ENCODE measurements at regions of chr1 and their contacts with region 1.

Region 1: GRCh38 chr1:204115116-204115515 is 36.7 kb downstream of the ETNK2 start:
- DNase-seq: no peak
- H3K4me3 ChIP-seq: no peak overlapping the region
- H3K27ac ChIP-seq: 0 out of 2 replicates have a peak overlapping the region, but pooled peaks have one; percentile 31
- H3K4me1 ChIP-seq: peaks cover 42% of the 10 kb centered on the region
- H3K27me3 ChIP-seq: no peaks in the 10 kb centered on the region
- CTCF ChIP-seq: no peak

Region 2: DNA sequence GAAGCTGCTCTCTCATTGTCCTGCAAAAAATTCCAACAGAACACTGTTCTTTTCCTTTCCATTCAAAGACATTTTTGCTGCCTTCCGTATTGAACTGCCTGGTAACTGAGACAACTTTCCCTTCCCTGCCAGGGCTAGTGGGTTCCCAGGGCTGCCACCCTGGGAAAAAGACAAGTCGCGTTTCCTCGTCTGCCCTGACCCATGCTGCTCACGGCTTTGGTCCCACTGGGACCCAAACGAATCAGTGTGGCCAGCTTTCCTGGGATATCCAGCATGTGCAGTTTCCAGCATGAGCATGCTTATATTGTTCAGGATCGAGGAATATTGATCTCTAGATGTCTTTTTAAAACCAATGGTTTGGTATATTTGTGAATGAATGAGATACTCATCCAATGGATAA is 24.1 kb before region 1 on chr1:
- CTCF ChIA-PET with region 1: interaction called, 16 read pairs
- POLR2A ChIA-PET with region 1: no interaction called
- intact Hi-C with region 1: no loop called
- DNase-seq: no peak
- H3K4me3 ChIP-seq: no peak overlapping the region
- H3K27ac ChIP-seq: peak overlapping the region; percentile 24; the same call in 1 of the 2 replicates
- H3K4me1 ChIP-seq: peaks cover 4% of the 10 kb centered on the region; the same call in 1 of the 2 replicates
- H3K27me3 ChIP-seq: no peaks in the 10 kb centered on the region
- CTCF ChIP-seq: no peak

Measured in PC-9 (cell line).